Head of caudate nucleus (tissue), 42 donors: ENCODE measurements at regions of chr7 and their contacts with region 1.

Region 1: GRCh38 chr7:33128990-33129805 is at the start of gene BBS9:
- DNase-seq: peak; percentile 92 to 99 (median 95)

Region 2: GRCh38 chr7:33109005-33109757 is 20.0 kb before region 1 on chr7 and contains the start of gene RP9:
- intact Hi-C with region 1: loop called (anchors 2 kb)
- DNase-seq: peak; percentile 11 to 87 (median 74)